ENCODE measurements at regions of chr5 and their contacts with region 1.

Region 1: GRCh38 chr5:37774912-37775483 is 64.8 kb downstream of the GDNF start:
- DNase-seq: no peak
- H3K4me3 ChIP-seq: no peak overlapping the region
- H3K27ac ChIP-seq: peak overlapping the region in 2 of 4 donors; percentile 87 to 93
- H3K4me1 ChIP-seq: peaks cover 0 to 51% (median 38%) of the 10 kb centered on the region in 4 donors
- H3K27me3 ChIP-seq: no peaks in the 10 kb centered on the region
- CTCF ChIP-seq: peak in 2 of 4 experiments; percentile 45 to 56
- EP300 ChIP-seq: no peak
- POLR2A ChIP-seq: no peak

Region 2: DNA sequence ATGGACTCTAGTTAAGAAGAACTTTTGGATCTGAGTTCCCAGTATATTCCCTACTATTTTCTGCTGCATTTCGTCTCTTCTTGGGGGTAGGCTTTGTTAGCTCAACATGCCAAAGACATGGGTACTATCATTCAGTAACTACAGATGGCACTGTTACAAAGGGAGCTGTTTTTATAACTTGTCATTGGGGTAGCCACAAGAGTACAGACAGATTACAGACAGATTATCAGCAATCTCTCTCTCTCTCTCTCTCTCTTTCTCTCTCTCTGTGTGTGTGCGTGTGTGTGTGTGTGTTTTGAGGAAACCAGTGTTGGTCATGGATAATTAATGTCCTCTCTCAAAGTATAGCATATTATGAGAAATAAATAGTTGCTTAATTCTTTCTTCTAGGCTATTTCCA is 279.8 kb before region 1 on chr5:
- intact Hi-C with region 1: loop called (anchors 10 kb)
- DNase-seq: no peak
- H3K4me3 ChIP-seq: no peak overlapping the region
- H3K27ac ChIP-seq: peak overlapping the region; percentile 54 to 83 (median 72)
- H3K4me1 ChIP-seq: peaks cover 0 to 29% (median 28%) of the 10 kb centered on the region in 4 donors
- H3K27me3 ChIP-seq: no peaks in the 10 kb centered on the region
- CTCF ChIP-seq: peak in 1 of 4 experiments; percentile 6
- EP300 ChIP-seq: no peak
- POLR2A ChIP-seq: no peak

Region 3: GRCh38 chr5:37615184-37615583 is 159.8 kb before region 1 on chr5:
- intact Hi-C with region 1: loop called (anchors 5 kb)
- DNase-seq: no peak
- H3K4me3 ChIP-seq: no peak overlapping the region
- H3K27ac ChIP-seq: peak overlapping the region; percentile 53 to 83 (median 73)
- H3K4me1 ChIP-seq: peaks cover 0 to 28% (median 17%) of the 10 kb centered on the region in 4 donors
- H3K27me3 ChIP-seq: no peaks in the 10 kb centered on the region
- CTCF ChIP-seq: no peak
- EP300 ChIP-seq: peak; percentile 36 to 90 (median 66)
- POLR2A ChIP-seq: no peak

Region 4: DNA sequence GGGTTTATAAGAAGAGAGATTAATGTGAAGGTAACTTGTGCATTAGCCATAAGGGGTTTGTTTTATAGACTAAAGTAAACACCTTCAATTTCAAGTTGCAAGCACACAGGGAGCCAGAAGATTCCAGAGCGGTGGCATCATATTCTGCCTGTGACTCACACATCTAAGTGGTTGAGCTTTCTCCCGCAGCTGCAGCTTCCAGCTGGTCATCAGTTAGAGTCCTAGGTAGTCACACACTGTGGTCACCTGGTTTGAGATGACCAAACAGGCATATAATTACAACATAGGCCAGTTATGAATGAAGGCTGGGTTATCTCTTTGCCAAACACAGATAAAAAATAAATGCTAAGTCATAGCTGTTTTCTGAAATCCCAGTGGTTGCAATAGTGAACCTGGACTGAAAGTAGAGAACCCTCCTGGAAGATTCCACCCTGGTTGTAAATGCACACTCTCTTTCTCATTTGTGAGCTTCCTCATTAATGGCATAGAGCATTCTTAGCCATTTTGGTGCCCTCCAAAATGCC is 106.4 kb before region 1 on chr5:
- intact Hi-C with region 1: loop called (anchors 2 kb)
- DNase-seq: peak; percentile 89
- H3K4me3 ChIP-seq: no peak overlapping the region
- H3K27ac ChIP-seq: peak overlapping the region; percentile 34 to 85 (median 78)
- H3K4me1 ChIP-seq: peaks cover 0 to 72% (median 50%) of the 10 kb centered on the region in 4 donors
- H3K27me3 ChIP-seq: no peaks in the 10 kb centered on the region
- CTCF ChIP-seq: no peak
- EP300 ChIP-seq: peak in 2 of 4 donors; percentile 54 to 85
- POLR2A ChIP-seq: no peak

Region 5: DNA sequence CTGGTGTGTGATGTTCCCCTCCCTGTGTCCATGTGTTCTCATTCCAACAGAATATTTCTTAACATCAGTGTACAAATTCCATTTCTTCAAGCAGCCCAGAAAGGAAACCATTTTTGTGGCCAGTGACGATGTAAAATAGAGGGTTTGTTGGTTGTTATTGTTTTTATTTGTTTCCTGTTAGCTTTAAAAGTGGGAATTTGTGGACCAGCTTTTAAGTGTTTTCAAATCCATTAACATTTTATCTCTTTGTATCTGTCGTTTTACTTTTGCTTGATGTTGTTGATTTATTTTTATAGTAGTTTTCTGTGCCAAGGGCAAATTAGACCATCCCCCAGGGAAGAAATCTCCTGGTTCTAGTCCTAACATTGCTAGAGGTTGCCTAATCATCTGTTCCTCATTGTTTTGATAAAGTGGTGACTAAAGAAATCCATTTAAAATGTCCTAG is 35.2 kb before region 1 on chr5:
- intact Hi-C with region 1: no loop called
- DNase-seq: no peak
- H3K4me3 ChIP-seq: no peak overlapping the region
- H3K27ac ChIP-seq: peak overlapping the region in 1 of 4 donors; percentile 51
- H3K4me1 ChIP-seq: peaks cover 0 to 35% (median 21%) of the 10 kb centered on the region in 4 donors
- H3K27me3 ChIP-seq: no peaks in the 10 kb centered on the region
- CTCF ChIP-seq: no peak
- EP300 ChIP-seq: no peak
- POLR2A ChIP-seq: no peak

Region 6: DNA sequence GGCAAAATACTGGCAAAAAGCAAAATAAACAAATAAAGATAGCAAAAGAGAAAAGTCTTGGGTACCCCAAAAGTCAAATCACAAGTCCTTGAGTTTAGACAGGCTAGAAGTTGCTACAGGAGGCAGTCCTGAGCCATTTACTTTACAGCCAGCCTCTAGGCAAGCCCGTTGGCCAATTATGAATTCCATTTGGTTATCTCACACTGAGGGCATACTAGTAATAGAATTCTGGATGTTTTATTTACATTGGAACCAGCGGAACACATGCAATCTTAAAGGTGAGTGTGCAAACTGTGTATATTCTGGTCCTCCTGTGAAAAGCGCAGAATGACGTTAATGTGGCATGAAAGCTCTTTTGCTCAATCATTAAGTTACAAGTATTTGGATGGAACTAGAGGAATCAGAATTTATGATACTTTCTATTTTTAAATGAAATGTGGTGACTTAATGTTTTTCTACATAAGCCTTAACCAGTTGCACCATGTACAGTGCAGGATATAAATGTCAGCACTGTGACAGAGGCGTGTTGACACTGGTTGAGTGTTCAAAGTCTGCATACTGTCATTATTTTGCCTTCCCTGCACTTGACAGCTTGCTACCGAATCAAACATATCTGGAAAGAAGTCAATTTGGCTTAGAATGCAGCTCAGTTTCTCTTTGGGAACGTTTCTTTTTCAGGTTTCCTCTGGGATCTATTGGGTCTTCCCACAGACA is 57.0 kb after region 1 on chr5:
- intact Hi-C with region 1: loop called (anchors 1 kb)
- DNase-seq: no peak
- H3K4me3 ChIP-seq: no peak overlapping the region
- H3K27ac ChIP-seq: peak overlapping the region in 3 of 4 donors; percentile 85 to 97 (median 96)
- H3K4me1 ChIP-seq: peaks cover 0 to 80% (median 64%) of the 10 kb centered on the region in 4 donors
- H3K27me3 ChIP-seq: no peaks in the 10 kb centered on the region
- CTCF ChIP-seq: no peak
- EP300 ChIP-seq: no peak
- POLR2A ChIP-seq: no peak

Region 7: DNA sequence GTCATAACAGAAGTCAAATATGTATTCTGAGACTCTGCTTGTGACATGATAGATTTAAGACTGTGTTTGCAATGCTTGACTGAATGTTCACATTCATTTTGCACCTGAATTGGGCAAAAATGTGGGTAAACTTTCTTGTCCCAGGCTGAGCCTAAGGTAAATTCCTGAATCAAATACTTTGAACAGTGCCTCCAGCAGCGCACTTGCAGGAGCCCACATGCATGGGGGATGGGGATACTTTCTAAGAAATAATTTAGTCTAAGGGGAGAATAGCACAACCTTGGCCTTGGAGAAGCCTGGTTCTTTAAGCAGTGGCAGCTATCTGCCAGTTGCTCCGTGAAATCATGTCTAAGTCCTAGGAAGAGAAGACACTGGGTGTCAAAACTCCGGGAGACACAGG is 319.9 kb after region 1 on chr5:
- intact Hi-C with region 1: no loop called
- DNase-seq: no peak
- H3K4me3 ChIP-seq: no peak overlapping the region
- H3K27ac ChIP-seq: no peak overlapping the region
- H3K4me1 ChIP-seq: peaks cover 0 to 12% (median 0%) of the 10 kb centered on the region in 4 donors
- H3K27me3 ChIP-seq: no peaks in the 10 kb centered on the region
- CTCF ChIP-seq: no peak
- EP300 ChIP-seq: no peak
- POLR2A ChIP-seq: no peak

Measured in sigmoid colon (tissue), 7 donors.